CD4-positive, alpha-beta memory T cell (primary cell): ENCODE measurements at regions of chr22 and their contacts with region 1.

Region 1: DNA sequence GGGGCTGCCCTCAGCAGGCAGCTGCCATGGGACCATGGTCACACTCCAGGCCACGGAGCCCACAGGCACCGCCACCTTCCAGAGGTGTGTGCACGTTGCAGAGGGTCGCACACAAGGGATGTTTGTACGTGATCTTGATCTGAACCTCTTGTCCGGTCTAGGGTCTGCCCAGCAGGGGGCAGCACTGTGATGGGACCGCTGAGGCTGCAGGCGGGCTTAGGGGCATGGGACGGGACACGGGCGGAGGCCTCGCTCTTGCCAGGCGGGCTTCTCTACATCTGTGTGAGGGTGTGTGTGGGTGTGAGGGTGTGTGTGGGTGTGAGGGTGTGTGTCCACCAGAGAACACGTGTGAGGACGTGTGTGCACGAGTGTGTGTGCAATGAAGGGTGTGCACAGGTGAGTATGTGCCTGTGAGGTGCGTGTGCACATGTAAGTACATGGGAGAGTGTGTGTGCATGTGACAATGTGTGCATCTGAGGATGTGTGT is 52.4 kb downstream of the CACNA1I start:
- DNase-seq: peak; percentile 58 to 69 (median 64)
- H3K4me3 ChIP-seq: no peak overlapping the region
- H3K4me3 Mint-ChIP-seq: no peak overlapping the region
- H3K27ac ChIP-seq: no peak overlapping the region
- H3K27ac Mint-ChIP-seq: no peak overlapping the region
- H3K4me1 ChIP-seq: peaks cover 9% of the 10 kb centered on the region
- H3K4me1 Mint-ChIP-seq: peaks cover 4 to 5% (median 5%) of the 10 kb centered on the region in 4 donors
- H3K27me3 ChIP-seq: no peaks in the 10 kb centered on the region
- H3K27me3 Mint-ChIP-seq: peaks cover 1 to 8% of the 10 kb centered on the region in 2 donors

Region 2: DNA sequence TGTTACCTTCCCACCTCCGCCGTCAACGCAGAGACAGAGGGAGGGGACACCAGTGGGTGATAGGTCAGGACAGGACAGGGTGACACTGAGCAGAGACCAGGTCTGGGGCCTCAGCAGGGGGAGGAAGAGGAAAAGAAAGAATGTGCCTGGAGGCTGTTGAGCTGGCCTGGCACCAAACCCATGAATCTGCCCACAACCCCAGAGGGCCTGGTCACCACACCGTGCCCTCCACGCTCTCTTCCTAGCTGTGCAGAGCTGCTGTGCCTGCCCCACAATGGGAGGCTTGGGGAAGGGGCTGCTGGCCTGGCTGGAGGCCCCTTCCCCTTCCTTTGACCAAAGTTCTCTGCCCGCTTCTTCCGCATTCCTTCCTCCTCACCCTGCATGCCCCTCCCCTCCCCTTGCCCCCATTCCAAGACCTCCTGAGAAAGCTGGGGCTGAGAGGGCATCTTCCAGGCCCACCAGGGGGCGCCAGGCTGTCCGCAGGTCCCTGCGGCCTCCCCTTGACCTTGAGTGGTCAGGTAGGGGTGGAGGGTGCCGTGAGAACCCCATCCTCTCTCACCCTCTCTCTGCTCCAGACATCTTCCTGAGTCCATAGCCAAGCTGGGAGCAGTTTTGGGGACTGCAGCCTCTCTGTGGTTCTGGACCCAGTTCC is 63.3 kb before region 1 on chr22:
- CTCF ChIA-PET with region 1: no interaction called
- POLR2A ChIA-PET with region 1: no interaction called
- intact Hi-C with region 1: loop called (anchors 10 kb)
- DNase-seq: no peak
- H3K4me3 ChIP-seq: no peak overlapping the region
- H3K4me3 Mint-ChIP-seq: peak overlapping the region in 1 of 8 donors; percentile 23
- H3K27ac ChIP-seq: no peak overlapping the region
- H3K27ac Mint-ChIP-seq: no peak overlapping the region
- H3K4me1 ChIP-seq: peaks cover 6% of the 10 kb centered on the region
- H3K4me1 Mint-ChIP-seq: peaks cover 0 to 9% (median 2%) of the 10 kb centered on the region in 4 donors
- H3K27me3 ChIP-seq: peaks cover 21% of the 10 kb centered on the region
- H3K27me3 Mint-ChIP-seq: peaks cover 19 to 26% of the 10 kb centered on the region in 2 donors